IMR-90 (cell line): ENCODE measurements at regions of chr18 and their contacts with region 1.

Region 1: GRCh38 chr18:27808683-27809082 is 368.2 kb downstream of the CDH2 start:
- DNase-seq: no peak
- ATAC-seq: no peak
- H3K4me3 ChIP-seq: no peak overlapping the region
- H3K27ac ChIP-seq: no peak overlapping the region
- H3K4me1 ChIP-seq: no peaks in the 10 kb centered on the region
- H3K27me3 ChIP-seq: no peaks in the 10 kb centered on the region
- CTCF ChIP-seq: no peak
- POLR2A ChIP-seq: no peak
- RAD21 ChIP-seq: no peak

Region 2: DNA sequence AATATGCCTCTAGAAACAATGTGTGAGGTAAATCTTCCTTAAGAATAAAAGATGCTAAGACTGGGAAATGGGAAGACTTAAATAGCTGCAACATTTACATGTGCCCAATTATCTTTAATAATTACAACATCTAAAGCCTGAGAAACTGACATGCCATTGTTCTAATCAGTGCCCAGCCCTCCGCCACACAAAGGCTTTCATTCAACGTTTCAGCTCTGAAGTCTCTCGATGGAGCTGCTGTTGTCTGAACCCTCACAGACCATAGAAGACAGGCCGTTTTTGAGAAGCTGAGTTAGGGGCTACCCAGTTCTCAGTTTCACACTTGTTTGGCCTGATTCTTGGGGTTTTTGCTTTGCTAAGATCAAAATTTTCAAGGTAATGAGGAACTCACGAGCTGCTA is 308.2 kb before region 1 on chr18:
- CTCF ChIA-PET with region 1: no interaction called
- POLR2A ChIA-PET with region 1: no interaction called
- dilution Hi-C with region 1: no loop called
- in situ Hi-C with region 1: no loop called
- intact Hi-C with region 1: no loop called
- DNase-seq: no peak
- ATAC-seq: no peak
- H3K4me3 ChIP-seq: no peak overlapping the region
- H3K27ac ChIP-seq: no peak overlapping the region
- H3K4me1 ChIP-seq: no peaks in the 10 kb centered on the region
- H3K27me3 ChIP-seq: no peaks in the 10 kb centered on the region
- CTCF ChIP-seq: no peak
- POLR2A ChIP-seq: no peak
- RAD21 ChIP-seq: no peak

Region 3: GRCh38 chr18:27735113-27735512 is 73.6 kb before region 1 on chr18:
- CTCF ChIA-PET with region 1: no interaction called
- POLR2A ChIA-PET with region 1: interaction called, 11 read pairs
- dilution Hi-C with region 1: no loop called
- in situ Hi-C with region 1: no loop called
- intact Hi-C with region 1: no loop called
- DNase-seq: no peak
- ATAC-seq: no peak
- H3K4me3 ChIP-seq: no peak overlapping the region
- H3K27ac ChIP-seq: no peak overlapping the region
- H3K4me1 ChIP-seq: no peaks in the 10 kb centered on the region
- H3K27me3 ChIP-seq: no peaks in the 10 kb centered on the region
- CTCF ChIP-seq: no peak
- POLR2A ChIP-seq: no peak
- RAD21 ChIP-seq: no peak

Region 4: DNA sequence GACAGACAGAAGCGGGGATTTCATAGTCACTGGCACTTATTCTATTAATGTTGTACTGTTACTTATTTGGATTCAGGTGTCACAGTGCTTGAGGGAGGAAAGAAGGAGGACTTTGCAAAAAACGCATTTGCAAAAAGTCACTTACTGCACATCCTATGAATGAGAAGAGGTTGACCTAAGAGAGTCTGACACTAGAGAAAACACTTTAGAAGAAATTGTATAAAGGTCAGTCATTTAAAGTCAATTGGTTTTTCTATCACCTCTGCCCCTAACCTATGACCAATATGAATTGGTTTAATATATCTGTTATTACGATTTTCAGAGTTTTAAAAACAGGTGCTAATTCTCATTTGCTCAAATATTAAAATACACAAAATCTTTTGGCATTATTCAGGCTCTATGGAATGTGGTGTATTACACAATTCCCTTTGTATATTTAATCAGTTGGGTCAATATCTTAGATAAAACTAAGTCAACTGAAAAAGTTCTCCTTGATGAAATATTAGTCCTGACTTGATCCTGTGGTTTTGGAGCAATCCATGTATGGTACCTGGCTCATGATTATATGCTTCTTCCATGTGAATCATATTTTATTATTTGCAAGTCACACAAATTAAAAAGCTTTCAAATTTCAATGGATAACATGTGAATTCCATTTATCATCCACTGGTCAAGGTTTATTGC is 210.9 kb after region 1 on chr18:
- CTCF ChIA-PET with region 1: no interaction called
- POLR2A ChIA-PET with region 1: no interaction called
- dilution Hi-C with region 1: no loop called
- in situ Hi-C with region 1: no loop called
- intact Hi-C with region 1: no loop called
- DNase-seq: peak; percentile 35
- ATAC-seq: no peak; the same call in 1 of the 2 replicates
- H3K4me3 ChIP-seq: no peak overlapping the region
- H3K27ac ChIP-seq: no peak overlapping the region
- H3K4me1 ChIP-seq: no peaks in the 10 kb centered on the region
- H3K27me3 ChIP-seq: no peaks in the 10 kb centered on the region
- CTCF ChIP-seq: no peak
- POLR2A ChIP-seq: no peak
- RAD21 ChIP-seq: no peak